SK-N-SH (cell line): ENCODE measurements at regions of chr7 and their contacts with region 1.

Region 1: GRCh38 chr7:43954524-43955228 is 28.4 kb downstream of the UBE2D4 start:
- DNase-seq: peak; percentile 81
- H3K4me3 ChIP-seq: no peak overlapping the region
- H3K27ac ChIP-seq: no peak overlapping the region
- H3K4me1 ChIP-seq: no peaks in the 10 kb centered on the region
- H3K27me3 ChIP-seq: no peaks in the 10 kb centered on the region
- CTCF ChIP-seq: peak; percentile 70
- EP300 ChIP-seq: peak in 1 of 2 experiments; percentile 38; a peak in 1 of 4 replicates
- RAD21 ChIP-seq: peak; percentile 99

Region 2: DNA sequence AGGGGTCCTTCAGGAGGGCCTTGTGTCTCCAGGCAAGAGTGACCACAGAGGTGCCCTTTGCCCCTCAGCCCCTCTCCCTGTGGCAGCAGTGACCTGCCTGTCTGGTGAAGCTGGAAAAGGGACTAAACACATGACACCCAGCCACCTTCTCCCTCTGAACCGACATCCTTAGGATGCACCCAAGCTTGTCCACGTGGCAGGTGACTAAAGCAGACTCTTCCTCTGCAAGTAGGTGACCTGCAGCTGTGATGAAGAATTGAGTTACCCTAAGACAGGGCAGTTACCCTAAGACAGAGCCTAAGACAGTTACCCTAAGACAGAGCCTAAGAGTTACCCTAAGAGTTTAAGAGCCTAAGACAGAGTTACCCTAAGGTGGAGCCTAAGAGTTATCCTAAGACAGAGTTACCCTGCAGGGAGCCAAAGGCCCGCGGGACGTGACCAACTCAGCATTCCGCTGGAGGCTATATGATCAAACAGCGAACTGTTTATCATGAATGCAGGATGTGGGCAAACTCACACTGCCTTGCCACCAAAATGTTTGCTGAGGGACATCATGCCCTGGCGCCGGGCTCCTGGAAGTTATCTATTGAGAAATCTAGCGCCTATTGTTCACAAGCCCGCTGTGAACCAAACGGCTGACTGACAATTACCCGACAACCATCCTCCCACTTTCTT is 146.4 kb before region 1 on chr7:
- CTCF ChIA-PET with region 1: no interaction called
- POLR2A ChIA-PET with region 1: no interaction called
- DNase-seq: no peak
- H3K4me3 ChIP-seq: no peak overlapping the region
- H3K27ac ChIP-seq: no peak overlapping the region
- H3K4me1 ChIP-seq: no peaks in the 10 kb centered on the region
- H3K27me3 ChIP-seq: no peaks in the 10 kb centered on the region; the same call in 1 of the 2 replicates
- CTCF ChIP-seq: no peak
- EP300 ChIP-seq: no peak
- RAD21 ChIP-seq: no peak

Region 3: GRCh38 chr7:43850348-43851116 is 104.1 kb before region 1 on chr7:
- CTCF ChIA-PET with region 1: interaction called, 10 read pairs
- POLR2A ChIA-PET with region 1: no interaction called
- DNase-seq: no peak
- H3K4me3 ChIP-seq: no peak overlapping the region
- H3K27ac ChIP-seq: no peak overlapping the region
- H3K4me1 ChIP-seq: peaks cover 0 to 6% of the 10 kb centered on the region in 2 experiments; a peak in 1 of 4 replicates
- H3K27me3 ChIP-seq: 0 out of 2 replicates have a peak, but pooled peaks cover 5% of the 10 kb centered on the region
- CTCF ChIP-seq: no peak
- EP300 ChIP-seq: no peak
- RAD21 ChIP-seq: no peak

Region 4: DNA sequence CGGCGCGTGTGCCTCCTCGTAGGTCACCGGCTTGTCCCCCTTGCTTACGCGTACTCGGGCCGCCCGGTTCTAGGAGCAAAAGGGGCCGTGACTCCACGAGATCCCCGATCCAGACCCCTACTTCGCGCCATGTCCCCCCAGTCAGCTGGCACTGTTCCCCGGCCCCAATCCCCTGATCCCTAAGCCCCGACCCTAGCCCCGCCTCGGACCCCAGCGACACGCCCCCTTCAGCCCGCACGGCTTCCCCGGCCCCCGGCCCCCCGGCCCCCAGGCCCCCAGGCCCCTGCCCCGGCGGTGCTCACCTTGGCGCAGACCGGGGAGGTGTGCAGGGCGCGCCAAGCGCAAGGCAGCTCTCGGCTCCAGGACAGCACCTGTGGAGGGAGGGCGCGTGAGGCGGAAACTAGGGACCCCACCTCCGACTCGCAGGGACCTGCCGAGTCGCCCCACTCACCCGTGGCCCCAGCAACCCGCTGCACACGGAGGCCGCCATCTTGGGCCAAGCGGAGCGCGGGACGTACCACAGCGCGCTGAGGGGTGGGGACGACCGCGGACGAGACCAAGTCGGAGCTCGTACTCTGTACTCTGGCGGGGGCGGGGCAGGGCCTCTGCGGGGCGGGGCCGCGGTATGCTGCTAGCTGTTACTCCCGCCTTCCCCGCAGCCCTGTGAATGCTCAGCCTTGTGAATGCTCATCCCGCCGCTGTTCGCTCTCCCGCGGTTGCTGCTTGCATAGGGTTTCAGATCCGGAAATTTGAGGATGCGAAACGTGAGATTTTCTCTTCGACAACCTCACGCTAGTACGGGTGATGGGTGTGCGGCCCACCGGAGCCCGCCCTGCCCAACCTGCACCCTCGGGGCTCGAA is 85.4 kb before region 1 on chr7 and contains the start of gene MRPS24:
- CTCF ChIA-PET with region 1: interaction called, 17 read pairs
- POLR2A ChIA-PET with region 1: interaction called, 4 read pairs
- DNase-seq: peak; percentile 100
- H3K4me3 ChIP-seq: peak within 1 kb of the TSS; percentile 86 to 91
- H3K27ac ChIP-seq: peak within 1 kb of the TSS; percentile 91 to 93
- H3K4me1 ChIP-seq: peaks cover 14 to 26% of the 10 kb centered on the region in 2 experiments
- H3K27me3 ChIP-seq: no peaks in the 10 kb centered on the region
- CTCF ChIP-seq: no peak
- EP300 ChIP-seq: peak in 1 of 2 experiments; percentile 61; a peak in 1 of 4 replicates
- RAD21 ChIP-seq: 0 out of 2 replicates have a peak, but pooled peaks have one; percentile 15
- polyA plus RNA-seq, gene MRPS24: 234 and 235 TPM in 2 replicates

Region 5: DNA sequence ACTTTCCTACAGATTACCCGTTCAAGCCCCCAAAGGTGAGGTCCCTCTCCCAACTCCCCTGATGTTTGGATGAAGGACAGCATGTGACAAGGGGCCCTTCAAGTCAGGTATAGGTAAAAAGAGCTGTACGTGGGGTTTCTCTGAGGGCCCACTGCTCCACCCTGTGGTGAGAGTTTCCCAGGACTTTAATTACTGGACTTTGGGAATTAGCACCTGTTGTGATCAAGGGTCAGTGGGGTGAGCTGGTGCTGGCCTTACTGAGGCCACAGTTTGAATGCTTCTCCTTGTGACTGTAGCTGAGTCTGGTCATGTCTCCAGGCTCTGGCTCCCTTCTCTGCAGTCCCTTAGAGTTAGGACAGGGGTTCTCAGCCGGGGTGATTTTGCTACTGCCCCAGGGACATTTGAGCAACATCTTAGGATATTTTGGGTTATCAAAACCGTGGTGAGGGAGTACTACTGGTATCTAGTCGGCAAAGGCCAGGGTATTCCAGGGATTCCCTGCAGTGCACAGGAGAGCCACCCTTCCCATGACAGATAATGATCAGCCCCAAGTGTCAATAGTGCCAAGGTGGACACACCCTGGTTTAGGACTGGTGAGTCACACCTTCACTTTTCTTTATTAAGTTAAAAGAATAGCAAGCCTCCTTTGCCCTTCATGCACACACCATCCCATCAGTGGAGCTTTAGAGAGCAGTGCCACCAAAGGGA is 11.5 kb before region 1 on chr7:
- CTCF ChIA-PET with region 1: interaction called, 45 read pairs
- POLR2A ChIA-PET with region 1: interaction called, 4 read pairs
- DNase-seq: no peak
- H3K4me3 ChIP-seq: no peak overlapping the region
- H3K27ac ChIP-seq: no peak overlapping the region; a peak in 1 of 4 replicates
- H3K4me1 ChIP-seq: peaks cover 0 to 24% of the 10 kb centered on the region in 2 experiments; a peak in 2 of 4 replicates
- H3K27me3 ChIP-seq: no peaks in the 10 kb centered on the region
- CTCF ChIP-seq: peak; percentile 21; the same call in 1 of the 2 replicates
- EP300 ChIP-seq: no peak
- RAD21 ChIP-seq: peak; percentile 58